Esophagus squamous epithelium (tissue), 5 donors: ENCODE measurements at regions of chr17 and their contacts with region 1.

Region 1: DNA sequence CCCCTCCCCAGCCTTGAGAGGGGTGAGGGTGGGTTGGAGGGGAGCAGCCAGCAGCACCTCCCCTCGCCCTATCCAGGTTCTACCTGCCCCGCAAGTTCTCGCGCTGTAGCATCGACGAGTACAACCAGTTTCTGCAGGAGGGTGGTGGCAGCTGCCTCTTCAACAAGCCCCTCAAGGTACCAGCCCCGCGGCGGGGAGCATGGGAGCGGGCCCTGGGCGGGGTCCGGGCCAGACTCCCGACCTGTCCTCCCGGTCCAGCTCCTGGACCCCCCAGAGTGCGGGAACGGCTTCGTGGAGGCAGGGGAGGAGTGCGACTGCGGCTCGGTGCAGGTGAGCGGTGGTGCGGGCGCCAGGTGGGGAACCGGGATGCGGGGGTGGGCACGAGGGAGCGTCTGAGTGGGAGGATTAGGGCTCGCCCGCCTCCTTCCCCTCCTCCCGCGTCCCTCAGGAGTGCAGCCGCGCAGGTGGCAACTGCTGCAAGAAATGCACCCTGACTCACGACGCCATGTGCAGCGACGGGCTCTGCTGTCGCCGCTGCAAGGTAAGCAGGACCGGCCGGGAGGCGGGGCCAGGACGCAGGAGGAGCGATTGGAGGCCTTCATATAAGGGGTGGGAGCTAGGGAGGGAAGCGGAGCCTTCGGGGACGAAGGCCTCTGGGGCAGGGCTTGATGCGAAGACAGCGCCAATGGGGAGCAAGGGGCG is 16.5 kb downstream of the ADAM11 start:
- DNase-seq: peak; percentile 88
- H3K4me3 ChIP-seq: peak overlapping the region; percentile 55 to 79 (median 62)
- H3K27ac ChIP-seq: peak overlapping the region; percentile 43 to 82 (median 64)
- H3K4me1 ChIP-seq: peaks cover 19 to 44% (median 28%) of the 10 kb centered on the region in 3 donors
- H3K27me3 ChIP-seq: peaks cover 0 to 72% (median 0%) of the 10 kb centered on the region in 4 donors
- CTCF ChIP-seq: peak in 1 of 6 experiments; percentile 48
- POLR2A ChIP-seq: no peak

Region 2: GRCh38 chr17:44864866-44865660 is 89.8 kb after region 1 on chr17:
- intact Hi-C with region 1: loop called (anchors 5 kb)
- DNase-seq: no peak
- H3K4me3 ChIP-seq: no peak overlapping the region
- H3K27ac ChIP-seq: no peak overlapping the region
- H3K4me1 ChIP-seq: no peaks in the 10 kb centered on the region
- H3K27me3 ChIP-seq: no peaks in the 10 kb centered on the region
- CTCF ChIP-seq: peak; percentile 46 to 93 (median 82)
- POLR2A ChIP-seq: no peak

Region 3: GRCh38 chr17:44941712-44942331 is 166.5 kb after region 1 on chr17:
- intact Hi-C with region 1: no loop called
- DNase-seq: no peak
- H3K4me3 ChIP-seq: no peak overlapping the region
- H3K27ac ChIP-seq: no peak overlapping the region
- H3K4me1 ChIP-seq: peaks cover 0 to 20% (median 0%) of the 10 kb centered on the region in 3 donors
- H3K27me3 ChIP-seq: no peaks in the 10 kb centered on the region
- CTCF ChIP-seq: no peak
- POLR2A ChIP-seq: no peak

Region 4: GRCh38 chr17:45060797-45061605 is 285.7 kb after region 1 on chr17 and contains the start of gene NMT1:
- intact Hi-C with region 1: no loop called
- DNase-seq: peak; percentile 93
- H3K4me3 ChIP-seq: peak within 1 kb of the TSS; percentile 65 to 91 (median 74)
- H3K27ac ChIP-seq: peak within 1 kb of the TSS; percentile 93 to 98 (median 96)
- H3K4me1 ChIP-seq: peaks cover 25 to 63% (median 40%) of the 10 kb centered on the region in 3 donors
- H3K27me3 ChIP-seq: no peaks in the 10 kb centered on the region
- CTCF ChIP-seq: peak in 4 of 6 experiments; percentile 8 to 37 (median 14)
- POLR2A ChIP-seq: peak in 3 of 4 donors; percentile 51 to 92 (median 89)
- total RNA-seq, gene NMT1: 54.6 to 66.2 (median 57.8) TPM